CD8-positive, alpha-beta T cell (primary cell): ENCODE measurements at regions of chr19 and their contacts with region 1.

Region 1: GRCh38 chr19:34677386-34678084 is at the start of gene ZNF302:
- DNase-seq: peak; percentile 86 to 97 (median 94)
- ATAC-seq: peak; percentile 87
- H3K4me3 ChIP-seq: peak within 1 kb of the TSS; percentile 85 to 94
- H3K4me3 Mint-ChIP-seq: peak within 1 kb of the TSS; percentile 99
- H3K27ac ChIP-seq: peak within 1 kb of the TSS; percentile 80 to 86
- H3K27ac Mint-ChIP-seq: peak within 1 kb of the TSS; percentile 100
- H3K4me1 ChIP-seq: peaks cover 23% of the 10 kb centered on the region
- H3K4me1 Mint-ChIP-seq: peaks cover 36% of the 10 kb centered on the region
- H3K27me3 ChIP-seq: no peaks in the 10 kb centered on the region
- H3K27me3 Mint-ChIP-seq: peaks cover 10% of the 10 kb centered on the region
- CTCF ChIP-seq: no peak
- total RNA-seq, gene ZNF302: 8.0 to 10.5 TPM

Region 2: DNA sequence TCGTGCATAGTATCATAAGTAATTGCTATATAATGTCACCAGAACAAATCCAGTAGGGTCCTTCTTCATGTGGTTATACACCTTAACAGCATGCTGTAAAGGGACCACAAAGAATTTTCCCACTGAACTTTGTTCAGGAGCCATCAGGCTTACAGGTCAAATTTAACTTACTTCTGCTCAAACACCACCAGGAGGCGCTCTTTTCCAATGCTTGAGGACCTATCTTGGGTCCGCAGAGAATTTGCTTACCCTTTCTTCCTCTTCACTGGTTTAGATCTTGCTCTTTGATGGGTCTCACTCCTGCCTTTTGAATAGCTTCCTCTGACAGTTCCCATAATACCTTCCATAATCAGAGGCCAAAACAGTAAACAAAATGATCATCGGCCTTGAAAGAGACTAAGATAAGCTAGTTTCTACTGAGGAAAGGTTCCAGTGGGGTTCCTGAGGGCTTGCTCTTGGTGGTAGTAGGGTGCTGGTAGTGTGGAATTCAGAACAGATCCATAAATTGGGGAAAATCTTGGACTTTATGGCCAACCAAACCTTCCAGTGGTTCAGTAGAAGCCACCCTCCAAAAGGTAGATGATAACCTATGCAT is 37.9 kb before region 1 on chr19:
- CTCF ChIA-PET with region 1: interaction called, 11 read pairs
- POLR2A ChIA-PET with region 1: interaction called, 5 read pairs
- intact Hi-C with region 1: no loop called
- DNase-seq: peak; percentile 9 to 86 (median 66)
- ATAC-seq: peak; percentile 56
- H3K4me3 ChIP-seq: no peak overlapping the region
- H3K4me3 Mint-ChIP-seq: no peak overlapping the region
- H3K27ac ChIP-seq: no peak overlapping the region
- H3K27ac Mint-ChIP-seq: no peak overlapping the region
- H3K4me1 ChIP-seq: no peaks in the 10 kb centered on the region
- H3K4me1 Mint-ChIP-seq: no peaks in the 10 kb centered on the region
- H3K27me3 ChIP-seq: no peaks in the 10 kb centered on the region
- H3K27me3 Mint-ChIP-seq: no peaks in the 10 kb centered on the region
- CTCF ChIP-seq: peak; percentile 86

Region 3: DNA sequence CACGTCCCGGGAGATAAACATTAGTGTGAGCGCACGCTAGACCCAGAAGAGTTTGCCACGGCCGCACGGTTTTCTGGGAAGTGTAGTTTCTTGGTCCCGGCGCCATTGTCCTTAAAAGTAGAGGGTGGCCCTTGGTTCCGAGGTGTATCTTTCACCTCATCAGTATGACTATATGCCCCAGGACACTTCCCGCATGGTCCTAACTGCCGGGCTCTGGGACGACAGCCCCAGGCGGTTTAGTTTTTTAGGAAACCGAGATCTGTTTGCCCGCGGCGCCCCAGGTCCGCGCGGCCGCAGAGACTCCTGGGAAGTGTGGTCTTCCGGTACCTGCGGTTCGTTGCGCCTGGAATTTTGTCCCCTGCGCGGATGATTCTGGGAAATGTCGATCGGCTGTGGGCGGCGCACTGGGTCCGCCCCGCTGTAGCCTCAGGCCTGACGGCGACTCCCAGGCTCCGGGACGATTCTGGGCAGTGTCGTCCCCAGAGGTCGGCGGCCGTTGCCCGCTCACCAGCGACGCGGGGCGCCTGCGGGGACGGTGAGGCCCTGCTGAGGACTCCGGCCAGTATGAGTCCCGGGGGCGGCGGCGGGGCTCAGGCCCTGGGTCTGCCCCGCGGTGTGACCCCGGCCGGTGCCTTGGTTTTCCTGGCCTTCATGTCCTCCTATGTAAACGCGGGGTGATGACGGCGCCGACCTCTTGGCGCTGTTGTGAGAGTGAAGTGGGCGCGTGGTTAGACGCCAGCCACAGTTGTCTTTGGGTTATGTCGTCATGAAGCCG is 56.5 kb after region 1 on chr19 and contains the start of gene ZNF181:
- CTCF ChIA-PET with region 1: no interaction called
- POLR2A ChIA-PET with region 1: interaction called, 12 read pairs
- intact Hi-C with region 1: loop called (anchors 1 kb)
- DNase-seq: peak; percentile 56 to 90 (median 82)
- ATAC-seq: peak; percentile 87
- H3K4me3 ChIP-seq: peak within 1 kb of the TSS; percentile 88 to 93
- H3K4me3 Mint-ChIP-seq: peak within 1 kb of the TSS; percentile 95
- H3K27ac ChIP-seq: peak within 1 kb of the TSS; percentile 92 to 96
- H3K27ac Mint-ChIP-seq: peak within 1 kb of the TSS; percentile 98
- H3K4me1 ChIP-seq: peaks cover 26% of the 10 kb centered on the region
- H3K4me1 Mint-ChIP-seq: peaks cover 34% of the 10 kb centered on the region
- H3K27me3 ChIP-seq: no peaks in the 10 kb centered on the region
- H3K27me3 Mint-ChIP-seq: no peaks in the 10 kb centered on the region
- CTCF ChIP-seq: no peak
- total RNA-seq, gene ZNF181: 1.5 to 1.7 TPM

Region 4: GRCh38 chr19:35628565-35629331 is 951.2 kb after region 1 on chr19 and contains the start of gene RBM42:
- CTCF ChIA-PET with region 1: no interaction called
- POLR2A ChIA-PET with region 1: no interaction called
- intact Hi-C with region 1: loop called in 1 of 2 experiments (anchors 5 kb)
- DNase-seq: peak; percentile 94 to 99 (median 98)
- ATAC-seq: peak; percentile 99
- H3K4me3 ChIP-seq: peak within 1 kb of the TSS; percentile 90 to 93
- H3K4me3 Mint-ChIP-seq: peak within 1 kb of the TSS; percentile 96
- H3K27ac ChIP-seq: peak within 1 kb of the TSS; percentile 90 to 91
- H3K27ac Mint-ChIP-seq: peak within 1 kb of the TSS; percentile 96
- H3K4me1 ChIP-seq: peaks cover 17% of the 10 kb centered on the region
- H3K4me1 Mint-ChIP-seq: peaks cover 24% of the 10 kb centered on the region
- H3K27me3 ChIP-seq: no peaks in the 10 kb centered on the region
- H3K27me3 Mint-ChIP-seq: no peaks in the 10 kb centered on the region
- CTCF ChIP-seq: no peak
- total RNA-seq, gene RBM42: 49.9 to 51.3 TPM